Gastrocnemius medialis (tissue), 4 donors: ENCODE measurements at regions of chr2 and their contacts with region 1.

Region 1: DNA sequence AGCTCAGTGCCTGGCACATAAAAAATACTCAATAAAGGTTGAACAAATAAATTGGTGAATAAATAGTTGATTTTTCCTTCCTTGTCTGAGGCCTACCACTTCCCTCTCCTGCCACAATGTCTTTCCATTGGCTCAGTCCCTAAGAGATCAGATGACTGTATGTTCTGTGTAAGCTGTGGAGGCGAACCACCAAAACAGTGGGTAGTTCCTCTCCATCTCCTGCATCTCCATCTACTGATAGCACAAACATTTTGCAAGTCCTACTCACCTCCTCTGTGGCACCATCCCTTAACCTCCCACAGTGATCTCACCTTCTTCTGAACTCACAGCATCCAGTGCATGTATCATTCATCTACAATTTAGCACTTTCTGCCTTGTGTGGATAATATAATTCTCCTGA is 50.2 kb downstream of the PCBP1 start:
- DNase-seq: no peak
- ATAC-seq: no peak
- H3K4me3 ChIP-seq: no peak overlapping the region
- H3K27ac ChIP-seq: peak overlapping the region; percentile 16 to 92 (median 58)
- H3K4me1 ChIP-seq: peaks cover 30 to 37% of the 10 kb centered on the region in 2 donors
- H3K27me3 ChIP-seq: no peaks in the 10 kb centered on the region
- CTCF ChIP-seq: no peak
- POLR2A ChIP-seq: no peak

Region 2: GRCh38 chr2:70094978-70095719 is 42.4 kb before region 1 on chr2:
- in situ Hi-C with region 1: loop called in 1 of 4 experiments (anchors 5 kb)
- intact Hi-C with region 1: no loop called
- DNase-seq: peak in 1 of 2 donors; percentile 43
- ATAC-seq: peak; percentile 45 to 57
- H3K4me3 ChIP-seq: no peak overlapping the region
- H3K27ac ChIP-seq: peak overlapping the region; percentile 62 to 72 (median 67)
- H3K4me1 ChIP-seq: peaks cover 8 to 13% of the 10 kb centered on the region in 2 donors
- H3K27me3 ChIP-seq: no peaks in the 10 kb centered on the region
- CTCF ChIP-seq: no peak
- POLR2A ChIP-seq: peak; percentile 17 to 27